ENCODE measurements at regions of chr1 and their contacts with region 1.

Region 1: DNA sequence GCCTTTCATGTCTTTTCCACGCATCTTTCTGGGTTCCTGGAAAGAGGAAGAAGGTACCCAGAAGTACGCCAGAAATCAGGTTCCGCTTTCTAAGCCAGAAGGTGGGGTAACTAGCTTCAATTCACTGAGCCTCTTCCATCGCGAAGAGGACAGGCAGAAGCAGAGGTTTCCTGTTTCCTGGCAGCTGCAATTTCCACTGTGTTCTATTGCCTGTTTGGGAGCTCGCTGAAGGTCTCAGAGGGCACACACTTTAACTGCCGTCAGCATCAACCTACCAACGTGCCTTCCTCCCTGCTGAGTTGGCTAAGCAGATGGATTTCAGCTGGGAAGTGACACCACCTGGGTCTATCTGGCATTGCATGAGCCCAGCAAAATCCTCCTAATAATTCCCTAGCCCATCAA is 10.0 kb downstream of the NCF2 start:
- DNase-seq: no peak
- H3K4me3 ChIP-seq: no peak overlapping the region
- CTCF ChIP-seq: peak; percentile 36

Region 2: GRCh38 chr1:183533617-183534174 is 46.6 kb before region 1 on chr1:
- CTCF ChIA-PET with region 1: no interaction called
- POLR2A ChIA-PET with region 1: no interaction called
- DNase-seq: no peak
- H3K4me3 ChIP-seq: no peak overlapping the region
- CTCF ChIP-seq: no peak

Region 3: GRCh38 chr1:183551904-183552303 is 28.4 kb before region 1 on chr1:
- CTCF ChIA-PET with region 1: no interaction called
- POLR2A ChIA-PET with region 1: no interaction called
- DNase-seq: no peak
- H3K4me3 ChIP-seq: no peak overlapping the region
- CTCF ChIP-seq: no peak

Region 4: GRCh38 chr1:183568176-183569021 is 11.9 kb before region 1 on chr1:
- CTCF ChIA-PET with region 1: interaction called, 18 read pairs
- POLR2A ChIA-PET with region 1: interaction called, 3 read pairs
- DNase-seq: no peak
- H3K4me3 ChIP-seq: no peak overlapping the region
- CTCF ChIP-seq: no peak

Region 5: GRCh38 chr1:183590244-183591191 is 10.2 kb after region 1 on chr1 and contains the start of gene NCF2:
- CTCF ChIA-PET with region 1: interaction called, 13 read pairs
- POLR2A ChIA-PET with region 1: no interaction called
- DNase-seq: no peak
- H3K4me3 ChIP-seq: no peak within 1 kb of the TSS
- CTCF ChIP-seq: no peak

Measured in AG04449 (cell line).